ENCODE measurements at regions of chr6 and their contacts with region 1.

Region 1: DNA sequence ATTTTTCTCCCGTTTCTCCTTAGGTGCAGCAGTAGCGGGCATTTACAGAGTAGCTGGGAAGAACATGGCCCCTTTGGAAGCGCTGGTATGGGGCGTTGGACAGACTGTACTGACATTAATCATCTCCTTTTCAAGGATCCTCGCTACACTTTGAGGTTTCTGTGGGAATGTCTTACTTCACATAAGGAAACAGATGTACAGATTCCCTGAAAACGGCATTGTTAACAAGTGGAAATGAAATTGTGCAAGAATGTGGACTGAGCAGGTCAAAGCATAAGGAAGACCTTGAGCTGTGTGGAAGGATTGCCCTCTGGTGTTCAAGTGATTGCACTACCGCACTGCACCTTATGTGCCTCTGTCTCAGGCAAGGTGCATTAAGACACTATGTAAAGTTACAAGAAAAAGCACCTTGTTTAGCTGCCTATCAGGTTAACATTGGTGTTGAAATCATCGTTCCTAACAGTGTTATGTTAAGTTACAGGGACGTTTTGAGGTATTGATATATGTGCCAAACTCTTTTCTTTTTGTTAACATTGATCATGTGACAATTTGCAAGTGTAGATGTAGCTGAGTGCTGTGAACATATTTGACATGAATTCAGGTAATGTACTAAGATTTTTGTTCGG is 38.0 kb downstream of the TMEM170B start:
- DNase-seq: peak in 8 of 9 experiments; percentile 5 to 67 (median 42)
- ATAC-seq: peak; percentile 88
- H3K4me3 ChIP-seq: no peak overlapping the region
- H3K4me3 Mint-ChIP-seq: no peak overlapping the region
- H3K27ac ChIP-seq: no peak overlapping the region
- H3K27ac Mint-ChIP-seq: no peak overlapping the region
- H3K4me1 ChIP-seq: no peaks in the 10 kb centered on the region
- H3K4me1 Mint-ChIP-seq: no peaks in the 10 kb centered on the region
- H3K27me3 ChIP-seq: no peaks in the 10 kb centered on the region
- H3K27me3 Mint-ChIP-seq: no peaks in the 10 kb centered on the region
- CTCF ChIP-seq: peak; percentile 85

Region 2: GRCh38 chr6:10954590-10955010 is 620.9 kb before region 1 on chr6:
- CTCF ChIA-PET with region 1: no interaction called
- POLR2A ChIA-PET with region 1: no interaction called
- intact Hi-C with region 1: loop called in 1 of 2 experiments (anchors 5 kb)
- DNase-seq: peak; percentile 24 to 59 (median 47)
- ATAC-seq: peak; percentile 66
- H3K4me3 ChIP-seq: no peak overlapping the region
- H3K4me3 Mint-ChIP-seq: no peak overlapping the region
- H3K27ac ChIP-seq: no peak overlapping the region
- H3K27ac Mint-ChIP-seq: no peak overlapping the region
- H3K4me1 ChIP-seq: no peaks in the 10 kb centered on the region
- H3K4me1 Mint-ChIP-seq: peaks cover 2% of the 10 kb centered on the region
- H3K27me3 ChIP-seq: peaks cover 0 to 8% of the 10 kb centered on the region in 2 experiments
- H3K27me3 Mint-ChIP-seq: peaks cover 11% of the 10 kb centered on the region
- CTCF ChIP-seq: peak; percentile 47

Region 3: DNA sequence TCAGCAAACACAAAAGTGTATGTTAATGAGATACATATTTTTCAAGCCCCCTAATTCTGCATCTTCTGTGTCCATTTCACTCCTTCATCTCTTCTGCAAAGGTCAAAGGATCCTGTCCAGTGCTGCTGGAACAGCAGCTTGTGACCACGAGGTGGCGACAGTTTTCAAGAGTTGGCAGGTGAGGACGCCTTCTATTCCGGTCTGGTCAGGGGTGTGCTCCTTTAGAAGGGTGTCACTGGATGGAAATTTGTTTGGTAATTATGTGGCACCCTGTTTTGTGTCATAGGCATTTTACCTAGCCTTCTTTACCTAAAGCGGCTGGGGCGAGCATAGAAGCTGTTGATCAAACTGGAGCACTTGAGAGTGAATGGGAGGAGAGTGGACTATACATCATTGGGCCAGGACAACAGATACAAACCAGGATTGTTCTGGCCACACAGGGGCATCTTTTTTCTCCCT is 431.1 kb before region 1 on chr6:
- CTCF ChIA-PET with region 1: interaction called, 5 read pairs
- POLR2A ChIA-PET with region 1: no interaction called
- intact Hi-C with region 1: loop called (anchors 1 kb)
- DNase-seq: peak; percentile 42 to 82 (median 74)
- ATAC-seq: peak; percentile 77
- H3K4me3 ChIP-seq: no peak overlapping the region
- H3K4me3 Mint-ChIP-seq: no peak overlapping the region
- H3K27ac ChIP-seq: no peak overlapping the region
- H3K27ac Mint-ChIP-seq: no peak overlapping the region
- H3K4me1 ChIP-seq: no peaks in the 10 kb centered on the region
- H3K4me1 Mint-ChIP-seq: no peaks in the 10 kb centered on the region
- H3K27me3 ChIP-seq: no peaks in the 10 kb centered on the region
- H3K27me3 Mint-ChIP-seq: no peaks in the 10 kb centered on the region
- CTCF ChIP-seq: peak; percentile 92

Region 4: GRCh38 chr6:11947063-11947974 is 371.8 kb after region 1 on chr6:
- CTCF ChIA-PET with region 1: no interaction called
- POLR2A ChIA-PET with region 1: no interaction called
- intact Hi-C with region 1: no loop called
- DNase-seq: peak in 2 of 9 experiments; percentile 15 to 33
- ATAC-seq: peak; percentile 54
- H3K4me3 ChIP-seq: no peak overlapping the region
- H3K4me3 Mint-ChIP-seq: no peak overlapping the region
- H3K27ac ChIP-seq: no peak overlapping the region
- H3K27ac Mint-ChIP-seq: no peak overlapping the region
- H3K4me1 ChIP-seq: no peaks in the 10 kb centered on the region
- H3K4me1 Mint-ChIP-seq: no peaks in the 10 kb centered on the region
- H3K27me3 ChIP-seq: no peaks in the 10 kb centered on the region
- H3K27me3 Mint-ChIP-seq: no peaks in the 10 kb centered on the region
- CTCF ChIP-seq: peak; percentile 40